Ascending aorta (tissue), 2 donors: ENCODE measurements at regions of chr5 and their contacts with region 1.

Region 1: GRCh38 chr5:134370871-134371833 is at the start of gene UBE2B:
- DNase-seq: peak; percentile 97 to 99
- H3K4me3 ChIP-seq: peak within 1 kb of the TSS; percentile 79 to 89
- H3K27ac ChIP-seq: peak within 1 kb of the TSS; percentile 94 to 98
- H3K4me1 ChIP-seq: peaks cover 3 to 18% of the 10 kb centered on the region in 2 donors
- H3K27me3 ChIP-seq: no peaks in the 10 kb centered on the region
- CTCF ChIP-seq: no peak
- total RNA-seq, gene UBE2B: 42.6 TPM

Region 2: GRCh38 chr5:134176511-134177368 is 194.4 kb before region 1 on chr5 and contains the start of gene SKP1:
- intact Hi-C with region 1: loop called (anchors 2 kb)
- DNase-seq: peak in 1 of 2 donors; percentile 86
- H3K4me3 ChIP-seq: peak within 1 kb of the TSS; percentile 83 to 94
- H3K27ac ChIP-seq: peak within 1 kb of the TSS; percentile 95 to 99
- H3K4me1 ChIP-seq: peaks cover 2 to 28% of the 10 kb centered on the region in 2 donors
- H3K27me3 ChIP-seq: no peaks in the 10 kb centered on the region
- CTCF ChIP-seq: no peak
- total RNA-seq, gene SKP1: 144 TPM

Region 3: DNA sequence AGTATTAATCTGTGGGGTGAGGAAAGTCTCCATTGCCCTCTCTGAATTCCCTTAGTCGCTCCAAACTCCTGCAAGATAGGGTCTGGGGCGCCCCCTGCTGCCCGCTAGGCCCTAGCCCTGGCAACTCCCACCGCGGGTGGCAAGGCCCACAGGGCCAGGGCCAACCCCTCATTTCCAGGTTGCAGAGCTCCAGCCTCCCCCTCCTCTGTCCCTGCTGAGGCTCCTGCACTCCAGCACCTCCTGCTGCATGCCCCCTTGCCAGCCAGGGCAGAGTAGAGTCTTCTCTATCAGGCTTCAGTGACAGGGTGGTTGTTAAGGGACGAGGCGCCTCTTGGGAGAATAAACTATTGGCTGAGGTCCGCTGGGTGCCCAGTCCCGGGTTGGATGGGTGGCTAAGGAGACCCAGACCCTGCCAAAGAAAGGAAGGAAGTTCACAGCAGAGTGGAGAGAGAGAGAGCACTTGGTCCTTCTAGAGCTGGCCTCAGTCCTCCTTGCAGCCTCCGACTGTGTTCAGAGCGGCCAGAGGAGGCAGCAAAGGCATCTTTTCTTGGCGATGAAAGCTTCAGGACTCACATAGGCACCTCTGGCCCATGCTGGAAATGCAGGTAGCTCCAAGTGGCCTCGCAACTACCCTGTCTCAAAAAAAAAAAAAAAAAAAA is 215.8 kb after region 1 on chr5:
- intact Hi-C with region 1: loop called (anchors 5 kb)
- DNase-seq: peak in 1 of 2 donors; percentile 94
- H3K4me3 ChIP-seq: peak overlapping the region in 1 of 2 donors; percentile 46
- H3K27ac ChIP-seq: peak overlapping the region; percentile 24 to 39
- H3K4me1 ChIP-seq: peaks cover 3 to 5% of the 10 kb centered on the region in 2 donors
- H3K27me3 ChIP-seq: no peaks in the 10 kb centered on the region
- CTCF ChIP-seq: peak; percentile 69 to 81 (median 81)

Region 4: DNA sequence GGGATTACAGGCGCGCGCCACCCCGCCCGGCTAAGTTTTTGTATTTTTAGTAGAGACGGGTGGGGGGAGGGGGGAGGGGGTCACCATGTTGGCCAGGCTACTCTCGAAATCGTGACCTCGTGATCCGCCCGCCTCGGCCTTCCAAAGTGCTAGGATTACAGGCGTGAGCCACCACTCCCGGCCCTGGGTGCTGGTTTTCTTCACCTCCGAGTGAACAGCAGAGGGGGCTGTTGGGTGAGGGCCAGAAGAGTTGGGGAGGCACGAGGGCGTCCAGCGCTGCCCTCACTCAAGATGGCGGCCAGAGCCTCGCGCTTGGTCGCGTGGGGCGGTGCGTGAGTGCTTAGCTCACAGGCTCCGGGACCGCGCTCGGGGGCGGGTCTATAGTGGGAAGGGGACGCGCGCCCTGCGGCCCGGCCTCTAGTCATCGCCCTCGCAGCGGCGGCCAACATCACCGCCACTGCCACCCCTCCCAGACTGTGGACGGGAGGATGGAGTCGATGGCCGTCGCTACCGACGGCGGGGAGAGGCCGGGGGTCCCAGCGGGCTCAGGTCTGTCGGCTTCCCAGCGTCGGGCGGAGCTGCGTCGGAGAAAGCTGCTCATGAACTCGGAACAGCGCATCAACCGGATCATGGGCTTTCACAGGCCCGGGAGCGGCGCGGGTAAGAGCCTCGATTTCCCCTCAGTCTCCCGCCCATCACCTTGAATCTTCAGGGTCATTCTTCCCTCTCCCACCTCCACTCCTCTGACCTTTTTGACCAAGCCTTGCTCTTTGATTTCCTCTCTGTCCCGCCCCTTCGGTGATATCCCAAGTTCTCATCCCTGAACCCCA is 367.2 kb after region 1 on chr5 and contains the start of gene CAMLG:
- intact Hi-C with region 1: loop called (anchors 2 kb)
- DNase-seq: peak; percentile 89 to 99
- H3K4me3 ChIP-seq: peak within 1 kb of the TSS; percentile 72 to 92
- H3K27ac ChIP-seq: peak within 1 kb of the TSS; percentile 95 to 97
- H3K4me1 ChIP-seq: peaks cover 0 to 9% of the 10 kb centered on the region in 2 donors
- H3K27me3 ChIP-seq: no peaks in the 10 kb centered on the region
- CTCF ChIP-seq: peak; percentile 31 to 52 (median 47)
- total RNA-seq, gene CAMLG: 12.6 TPM

Region 5: DNA sequence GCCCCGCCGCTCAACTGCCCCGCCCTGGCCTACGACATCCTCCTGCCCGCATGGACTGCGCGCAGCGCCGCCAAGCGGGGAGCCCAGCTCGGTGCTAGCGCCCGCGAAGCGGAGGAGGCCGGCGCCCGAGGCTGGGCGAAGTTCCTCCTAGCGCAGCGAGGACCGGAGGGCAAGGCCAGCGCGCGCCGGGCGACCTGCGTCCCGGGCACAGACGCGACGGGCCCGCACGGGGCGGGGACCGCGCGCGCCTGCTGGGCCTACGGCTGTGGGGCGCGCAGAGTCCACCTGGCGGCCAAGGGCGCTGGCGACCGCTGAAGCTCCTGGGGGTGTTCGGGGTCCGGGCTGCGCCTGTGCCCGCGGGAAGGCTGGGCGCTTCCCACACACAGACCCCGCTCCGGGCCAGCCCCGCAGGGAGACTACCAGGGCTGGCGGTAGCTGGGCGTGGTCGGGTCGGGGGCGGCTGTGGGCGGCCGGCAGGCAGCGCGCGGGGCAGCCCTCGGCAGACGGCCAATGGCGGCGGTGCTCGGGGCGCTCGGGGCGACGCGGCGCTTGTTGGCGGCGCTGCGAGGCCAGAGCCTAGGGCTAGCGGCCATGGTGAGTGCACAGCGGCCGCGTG is 533.6 kb after region 1 on chr5 and contains the start of gene PCBD2:
- intact Hi-C with region 1: loop called (anchors 10 kb)
- DNase-seq: peak; percentile 62 to 94
- H3K4me3 ChIP-seq: peak within 1 kb of the TSS; percentile 85 to 97
- H3K27ac ChIP-seq: peak within 1 kb of the TSS; percentile 96
- H3K4me1 ChIP-seq: no peaks in the 10 kb centered on the region
- H3K27me3 ChIP-seq: no peaks in the 10 kb centered on the region
- CTCF ChIP-seq: peak; percentile 84 to 97 (median 89)
- total RNA-seq, gene PCBD2: 7.6 TPM